ENCODE measurements at regions of chr22 and their contacts with region 1.

Region 1: DNA sequence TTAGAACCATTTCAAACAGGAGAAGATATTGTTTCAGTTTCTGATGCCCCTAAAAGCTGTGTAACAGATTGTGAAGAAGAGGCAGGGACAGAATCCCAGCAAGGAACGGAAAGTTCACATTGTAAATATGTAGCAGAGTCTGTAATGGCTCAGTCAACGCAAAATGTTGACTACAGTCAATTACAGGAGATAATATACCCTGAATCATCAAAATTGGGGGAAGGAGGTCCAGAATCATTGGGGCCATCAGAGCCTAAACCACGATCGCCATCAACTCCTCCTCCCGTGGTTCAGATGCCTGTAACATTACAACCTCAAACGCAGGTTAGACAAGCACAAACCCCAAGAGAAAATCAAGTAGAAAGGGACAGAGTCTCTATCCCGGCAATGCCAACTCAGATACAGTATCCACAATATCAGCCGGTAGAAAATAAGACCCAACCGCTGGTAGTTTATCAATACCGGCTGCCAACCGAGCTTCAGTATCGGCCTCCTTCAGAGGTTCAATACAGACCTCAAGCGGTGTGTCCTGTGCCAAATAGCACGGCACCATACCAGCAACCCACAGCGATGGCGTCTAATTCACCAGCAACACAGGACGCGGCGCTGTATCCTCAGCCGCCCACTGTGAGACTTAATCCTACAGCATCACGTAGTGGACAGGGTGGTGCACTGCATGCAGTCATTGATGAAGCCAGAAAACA is 40.8 kb downstream of the IGLL1 start:
- DNase-seq: peak; percentile 77
- ATAC-seq: peak; percentile 87
- H3K4me3 ChIP-seq: peak overlapping the region; percentile 49; the same call in 1 of the 2 replicates
- H3K27ac ChIP-seq: no peak overlapping the region
- H3K4me1 ChIP-seq: 0 out of 2 replicates have a peak, but pooled peaks cover 9% of the 10 kb centered on the region
- H3K27me3 ChIP-seq: no peaks in the 10 kb centered on the region
- CTCF ChIP-seq: peak; percentile 69

Region 2: GRCh38 chr22:23402275-23403151 is 136.8 kb before region 1 on chr22:
- CTCF ChIA-PET with region 1: no interaction called
- POLR2A ChIA-PET with region 1: no interaction called
- intact Hi-C with region 1: loop called (anchors 1 kb)
- DNase-seq: peak; percentile 74
- ATAC-seq: peak; percentile 91
- H3K4me3 ChIP-seq: peak overlapping the region; percentile 64
- H3K27ac ChIP-seq: no peak overlapping the region
- H3K4me1 ChIP-seq: no peaks in the 10 kb centered on the region
- H3K27me3 ChIP-seq: no peaks in the 10 kb centered on the region
- CTCF ChIP-seq: peak; percentile 48

Region 3: GRCh38 chr22:23591201-23591791 is 52.0 kb after region 1 on chr22:
- CTCF ChIA-PET with region 1: interaction called, 5 read pairs
- POLR2A ChIA-PET with region 1: no interaction called
- intact Hi-C with region 1: loop called (anchors 2 kb)
- DNase-seq: peak; percentile 51
- ATAC-seq: peak; percentile 81
- H3K4me3 ChIP-seq: no peak overlapping the region
- H3K27ac ChIP-seq: no peak overlapping the region
- H3K4me1 ChIP-seq: no peaks in the 10 kb centered on the region
- H3K27me3 ChIP-seq: no peaks in the 10 kb centered on the region
- CTCF ChIP-seq: peak; percentile 86

Region 4: GRCh38 chr22:23849009-23850006 is 310.0 kb after region 1 on chr22:
- CTCF ChIA-PET with region 1: no interaction called
- POLR2A ChIA-PET with region 1: no interaction called
- intact Hi-C with region 1: loop called (anchors 5 kb)
- DNase-seq: peak; percentile 79
- ATAC-seq: peak; percentile 93
- H3K4me3 ChIP-seq: no peak overlapping the region; the same call in 1 of the 2 replicates
- H3K27ac ChIP-seq: no peak overlapping the region
- H3K4me1 ChIP-seq: no peaks in the 10 kb centered on the region
- H3K27me3 ChIP-seq: no peaks in the 10 kb centered on the region
- CTCF ChIP-seq: peak; percentile 83